Naive thymus-derived CD4-positive, alpha-beta T cell (primary cell): ENCODE measurements at regions of chr9 and their contacts with region 1.

Region 1: DNA sequence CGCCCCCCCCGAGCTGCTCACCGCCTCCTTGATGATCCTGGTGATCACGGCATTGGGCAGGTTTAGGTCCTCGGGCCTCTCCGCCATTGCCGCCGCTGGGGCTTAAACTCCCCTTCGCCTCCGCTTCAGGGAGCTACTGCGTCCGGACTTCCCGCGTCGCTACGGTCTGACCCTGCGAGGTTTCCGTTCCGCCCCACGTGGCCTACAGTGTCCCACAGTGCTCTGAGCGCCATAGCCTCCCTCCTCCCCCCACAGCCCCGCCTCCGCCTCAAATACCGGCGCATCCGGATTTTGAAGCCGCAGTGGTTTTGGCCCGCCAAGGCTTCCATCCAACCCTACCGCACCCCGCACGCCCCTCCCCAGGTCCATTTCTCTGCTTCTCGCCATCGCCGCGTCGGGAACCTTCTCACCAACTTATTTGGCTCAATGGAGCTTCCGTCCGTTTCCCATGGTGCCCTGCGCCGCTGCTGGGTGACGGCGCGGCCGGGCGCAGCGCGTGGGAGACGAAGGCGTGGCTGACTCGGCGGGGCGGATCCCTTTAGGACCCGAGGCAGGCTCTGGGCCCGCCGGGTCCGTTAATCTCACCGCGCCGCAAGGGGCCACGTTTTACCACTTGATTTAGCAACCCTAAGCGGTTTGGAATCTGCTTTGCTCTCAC is at the starts of genes C9orf43 and POLE3:
- DNase-seq: peak; percentile 90 to 98 (median 96)
- ATAC-seq: peak; percentile 95
- H3K4me3 ChIP-seq: peak within 1 kb of the TSS; percentile 92
- H3K4me3 Mint-ChIP-seq: peak within 1 kb of the TSS; percentile 94 to 100 (median 98)
- H3K27ac ChIP-seq: peak within 1 kb of the TSS; percentile 89
- H3K27ac Mint-ChIP-seq: peak within 1 kb of the TSS; percentile 98 to 100 (median 99)
- H3K4me1 ChIP-seq: peaks cover 3 to 9% of the 10 kb centered on the region in 2 donors
- H3K4me1 Mint-ChIP-seq: peaks cover 20 to 42% (median 31%) of the 10 kb centered on the region in 7 donors
- H3K27me3 ChIP-seq: no peaks in the 10 kb centered on the region
- H3K27me3 Mint-ChIP-seq: peaks cover 0 to 2% (median 0%) of the 10 kb centered on the region in 5 donors
- total RNA-seq, gene C9orf43: 0.41 to 0.97 (median 0.61) TPM
- total RNA-seq, gene POLE3: 38.6 to 65.3 (median 50.9) TPM

Region 2: GRCh38 chr9:112717661-112718341 is 692.5 kb before region 1 on chr9 and contains the start of gene INIP:
- CTCF ChIA-PET with region 1: no interaction called
- POLR2A ChIA-PET with region 1: no interaction called
- intact Hi-C with region 1: loop called in 1 of 2 experiments (anchors 2 kb)
- DNase-seq: peak; percentile 91 to 99 (median 98)
- ATAC-seq: peak; percentile 94
- H3K4me3 ChIP-seq: peak within 1 kb of the TSS; percentile 82
- H3K4me3 Mint-ChIP-seq: peak within 1 kb of the TSS; percentile 83 to 100 (median 96)
- H3K27ac ChIP-seq: peak within 1 kb of the TSS; percentile 96
- H3K27ac Mint-ChIP-seq: peak within 1 kb of the TSS; percentile 96 to 100 (median 99)
- H3K4me1 ChIP-seq: peaks cover 10% of the 10 kb centered on the region in 2 donors
- H3K4me1 Mint-ChIP-seq: peaks cover 14 to 39% (median 28%) of the 10 kb centered on the region in 7 donors
- H3K27me3 ChIP-seq: no peaks in the 10 kb centered on the region
- H3K27me3 Mint-ChIP-seq: no peaks in the 10 kb centered on the region
- total RNA-seq, gene INIP: 13.8 to 35.0 (median 28.3) TPM

Region 3: GRCh38 chr9:113275157-113276131 is 134.9 kb before region 1 on chr9 and contains the starts of genes CDC26 and PRPF4:
- CTCF ChIA-PET with region 1: interaction called, 12 read pairs
- POLR2A ChIA-PET with region 1: interaction called, 29 read pairs
- intact Hi-C with region 1: loop called (anchors 1 kb)
- DNase-seq: peak; percentile 85 to 95 (median 93)
- ATAC-seq: peak; percentile 97
- H3K4me3 ChIP-seq: peak within 1 kb of the TSS; percentile 87
- H3K4me3 Mint-ChIP-seq: no peak within 1 kb of the TSS
- H3K27ac ChIP-seq: peak within 1 kb of the TSS; percentile 98
- H3K27ac Mint-ChIP-seq: no peak within 1 kb of the TSS
- H3K4me1 ChIP-seq: peaks cover 8 to 16% of the 10 kb centered on the region in 2 donors
- H3K4me1 Mint-ChIP-seq: peaks cover 13 to 42% (median 34%) of the 10 kb centered on the region in 7 donors
- H3K27me3 ChIP-seq: no peaks in the 10 kb centered on the region
- H3K27me3 Mint-ChIP-seq: no peaks in the 10 kb centered on the region
- total RNA-seq, gene CDC26: 21.7 to 40.3 (median 34.4) TPM
- total RNA-seq, gene PRPF4: 17.4 to 36.9 (median 22.0) TPM

Region 4: DNA sequence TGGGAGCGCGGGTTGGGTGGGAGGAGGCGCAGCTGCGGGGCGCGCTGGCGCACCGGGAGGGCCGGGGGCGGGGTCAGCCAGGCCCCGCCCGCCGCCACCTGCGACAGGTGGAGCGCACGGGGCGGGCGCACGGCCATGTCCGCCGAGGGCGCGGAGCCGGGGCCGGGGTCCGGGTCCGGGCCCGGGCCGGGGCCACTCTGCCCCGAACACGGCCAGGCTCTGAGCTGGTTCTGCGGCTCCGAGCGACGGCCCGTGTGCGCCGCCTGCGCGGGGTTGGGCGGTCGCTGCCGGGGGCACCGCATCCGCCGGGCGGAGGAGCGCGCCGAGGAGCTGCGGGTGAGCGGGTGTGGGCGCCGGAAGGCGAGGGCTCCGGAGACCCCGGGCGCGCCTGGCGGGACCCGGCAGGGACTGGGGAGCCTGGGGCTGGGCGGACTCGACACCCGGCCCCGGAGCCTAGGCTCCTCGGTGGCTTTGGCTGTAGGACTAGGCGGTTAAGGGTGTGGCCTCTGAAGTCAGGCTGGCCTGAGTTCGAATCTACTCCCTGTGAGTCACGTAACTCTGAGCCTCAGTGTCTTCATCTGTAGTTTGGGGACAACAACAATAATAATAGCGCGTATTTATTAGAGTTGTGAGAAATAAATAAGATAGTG is 60.8 kb before region 1 on chr9 and contains the start of gene BSPRY:
- CTCF ChIA-PET with region 1: no interaction called
- POLR2A ChIA-PET with region 1: interaction called, 4 read pairs
- intact Hi-C with region 1: loop called in 1 of 2 experiments (anchors 1 kb)
- DNase-seq: peak in 7 of 9 donors; percentile 27 to 67 (median 44)
- ATAC-seq: peak; percentile 70
- H3K4me3 ChIP-seq: peak within 1 kb of the TSS; percentile 54
- H3K4me3 Mint-ChIP-seq: peak within 1 kb of the TSS; percentile 73 to 93 (median 81)
- H3K27ac ChIP-seq: no peak within 1 kb of the TSS
- H3K27ac Mint-ChIP-seq: peak within 1 kb of the TSS in 3 of 9 donors; percentile 5 to 87 (median 57)
- H3K4me1 ChIP-seq: peaks cover 13 to 15% of the 10 kb centered on the region in 2 donors
- H3K4me1 Mint-ChIP-seq: peaks cover 10 to 49% (median 21%) of the 10 kb centered on the region in 7 donors
- H3K27me3 ChIP-seq: peaks cover 3 to 5% of the 10 kb centered on the region in 2 donors
- H3K27me3 Mint-ChIP-seq: peaks cover 0 to 40% (median 29%) of the 10 kb centered on the region in 5 donors
- total RNA-seq, gene BSPRY: 0.13 to 9.6 (median 1.2) TPM in 3 of 5 experiments, not detected in the others

Region 5: GRCh38 chr9:113387560-113388230 is 22.6 kb before region 1 on chr9:
- CTCF ChIA-PET with region 1: no interaction called
- POLR2A ChIA-PET with region 1: no interaction called
- intact Hi-C with region 1: no loop called
- DNase-seq: no peak
- ATAC-seq: no peak
- H3K4me3 ChIP-seq: no peak overlapping the region
- H3K4me3 Mint-ChIP-seq: no peak overlapping the region
- H3K27ac ChIP-seq: no peak overlapping the region
- H3K27ac Mint-ChIP-seq: peak overlapping the region in 1 of 9 donors; percentile 18
- H3K4me1 ChIP-seq: no peaks in the 10 kb centered on the region
- H3K4me1 Mint-ChIP-seq: peaks cover 0 to 4% (median 0%) of the 10 kb centered on the region in 7 donors
- H3K27me3 ChIP-seq: no peaks in the 10 kb centered on the region
- H3K27me3 Mint-ChIP-seq: no peaks in the 10 kb centered on the region

Region 6: DNA sequence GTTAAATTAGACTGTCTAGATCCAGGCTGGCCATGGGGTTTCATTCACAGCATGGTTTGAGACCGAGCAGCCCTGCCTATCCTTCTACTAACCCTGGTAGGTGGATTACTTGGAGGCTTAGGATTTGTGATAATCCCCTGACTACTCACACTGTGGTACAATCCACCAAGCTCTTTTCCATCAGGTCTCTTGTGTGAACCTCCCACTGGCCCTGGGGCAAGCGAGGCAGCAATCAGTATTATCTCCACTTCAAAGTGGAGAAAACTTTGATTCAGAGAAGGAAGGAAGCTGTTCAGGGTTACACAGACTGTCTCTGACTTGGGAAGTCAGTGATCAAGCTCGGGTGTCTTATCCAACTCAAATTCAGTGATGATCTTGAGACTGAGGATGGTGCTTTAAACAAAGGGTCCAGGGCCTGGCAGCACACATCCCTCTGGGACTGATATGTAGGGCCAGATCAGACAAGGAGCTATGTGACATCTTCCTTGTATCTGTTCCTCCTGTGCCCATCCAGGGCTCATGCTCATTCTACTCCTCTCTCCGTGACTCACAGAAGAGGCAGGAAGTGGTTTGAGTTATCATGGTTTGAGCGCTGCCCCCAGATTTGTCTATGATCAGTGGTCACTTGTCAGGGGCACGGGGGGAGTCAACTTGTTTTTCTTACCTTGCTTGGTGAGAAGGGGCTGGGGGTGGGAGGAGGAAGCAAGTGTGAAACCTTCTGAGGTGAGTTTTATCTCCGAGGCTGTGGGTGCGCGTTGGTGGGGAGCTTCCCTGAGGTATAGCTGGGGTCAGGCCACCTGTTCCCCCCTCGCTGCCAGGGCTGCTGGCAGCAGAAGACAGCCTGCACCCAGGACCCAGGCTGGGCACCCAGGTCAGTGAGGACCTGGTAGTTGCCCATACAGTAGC is 101.8 kb after region 1 on chr9:
- CTCF ChIA-PET with region 1: no interaction called
- POLR2A ChIA-PET with region 1: interaction called, 9 read pairs
- intact Hi-C with region 1: loop called in 1 of 2 experiments (anchors 5 kb)
- DNase-seq: peak; percentile 17 to 82 (median 40)
- ATAC-seq: peak; percentile 74
- H3K4me3 ChIP-seq: peak overlapping the region; percentile 42
- H3K4me3 Mint-ChIP-seq: peak overlapping the region; percentile 72 to 88 (median 84)
- H3K27ac ChIP-seq: peak overlapping the region; percentile 64
- H3K27ac Mint-ChIP-seq: peak overlapping the region; percentile 85 to 97 (median 94)
- H3K4me1 ChIP-seq: peaks cover 43 to 57% of the 10 kb centered on the region in 2 donors
- H3K4me1 Mint-ChIP-seq: peaks cover 41 to 69% (median 60%) of the 10 kb centered on the region in 7 donors
- H3K27me3 ChIP-seq: no peaks in the 10 kb centered on the region
- H3K27me3 Mint-ChIP-seq: no peaks in the 10 kb centered on the region

Region 7: DNA sequence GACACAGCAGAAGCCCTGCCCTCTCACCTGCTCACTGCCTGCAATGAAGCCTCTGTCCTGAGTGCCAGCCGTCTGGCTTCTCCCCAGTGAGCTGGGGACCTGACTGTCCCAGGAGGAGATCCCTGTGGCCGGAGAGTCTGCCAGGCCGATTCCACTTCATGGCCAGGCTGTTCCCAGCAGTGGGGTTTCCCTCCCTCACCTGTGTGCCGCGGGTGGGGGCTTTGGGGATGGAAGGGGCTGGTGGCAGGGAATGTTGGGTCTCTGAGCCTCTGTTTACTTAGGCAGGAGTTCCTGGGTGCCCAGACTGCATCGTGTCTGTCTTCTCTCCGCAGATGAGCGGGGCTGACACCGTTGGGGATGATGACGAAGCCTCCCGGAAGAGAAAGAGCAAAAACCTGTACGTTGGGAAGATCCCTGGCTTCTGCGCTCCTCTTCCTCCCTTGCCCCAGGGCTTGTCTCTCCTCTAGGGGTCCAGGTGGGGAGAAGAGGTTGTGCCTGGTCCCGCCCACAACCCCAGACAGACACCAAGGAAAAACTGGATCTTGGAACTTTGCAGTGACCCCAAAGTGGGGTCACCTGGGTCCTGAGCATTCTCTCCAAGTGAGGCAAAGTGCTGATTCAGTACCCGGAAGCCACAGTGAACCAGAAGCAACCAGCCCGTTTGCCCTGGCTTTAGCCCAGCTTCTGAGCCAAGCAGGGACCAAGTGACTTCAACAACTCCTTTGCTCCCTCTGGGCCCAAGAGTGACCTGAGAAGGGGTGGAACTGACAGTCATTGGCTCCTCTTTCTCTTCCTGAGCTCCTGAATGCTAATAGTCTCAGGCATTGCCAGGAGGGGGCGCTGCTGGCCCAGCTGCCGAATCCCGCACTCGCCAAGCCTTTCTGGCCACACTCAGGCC is 180.9 kb after region 1 on chr9:
- CTCF ChIA-PET with region 1: interaction called, 3 read pairs
- POLR2A ChIA-PET with region 1: interaction called, 4 read pairs
- intact Hi-C with region 1: loop called (anchors 1 to 2 kb)
- DNase-seq: peak in 6 of 9 donors; percentile 30 to 75 (median 38)
- ATAC-seq: peak; percentile 58
- H3K4me3 ChIP-seq: no peak overlapping the region
- H3K4me3 Mint-ChIP-seq: no peak overlapping the region
- H3K27ac ChIP-seq: no peak overlapping the region
- H3K27ac Mint-ChIP-seq: peak overlapping the region in 1 of 9 donors; percentile 45
- H3K4me1 ChIP-seq: peaks cover 5 to 8% of the 10 kb centered on the region in 2 donors
- H3K4me1 Mint-ChIP-seq: peaks cover 20 to 47% (median 23%) of the 10 kb centered on the region in 7 donors
- H3K27me3 ChIP-seq: no peaks in the 10 kb centered on the region
- H3K27me3 Mint-ChIP-seq: no peaks in the 10 kb centered on the region